ENCODE measurements at regions of chr13 and their contacts with region 1.

Region 1: DNA sequence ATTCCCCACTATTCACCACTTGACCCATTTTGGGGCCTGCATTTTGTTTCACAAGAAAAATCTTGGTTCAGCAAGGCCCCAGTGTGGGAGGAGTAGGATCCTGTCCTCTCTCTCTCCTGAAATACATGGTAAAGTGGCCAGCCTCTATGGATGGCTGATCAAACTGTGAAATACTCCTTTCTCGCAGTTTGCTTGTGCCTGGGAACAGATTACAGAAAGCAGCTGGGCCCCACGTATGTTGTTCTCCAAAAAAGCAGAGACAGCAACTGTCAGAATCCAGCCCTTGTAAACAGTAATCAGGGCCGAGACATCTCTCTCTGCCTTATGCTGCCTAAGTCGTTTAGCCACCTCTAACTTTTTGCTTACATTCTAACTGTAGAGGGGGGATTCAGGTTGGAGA is 61.0 kb upstream of the RAP2A start:
- DNase-seq: no peak
- ATAC-seq: no peak
- H3K4me3 ChIP-seq: no peak overlapping the region
- H3K27ac ChIP-seq: no peak overlapping the region
- H3K4me1 ChIP-seq: peaks cover 0 to 17% (median 4%) of the 10 kb centered on the region in 12 donors
- H3K27me3 ChIP-seq: no peaks in the 10 kb centered on the region
- CTCF ChIP-seq: no peak
- POLR2A ChIP-seq: no peak

Region 2: DNA sequence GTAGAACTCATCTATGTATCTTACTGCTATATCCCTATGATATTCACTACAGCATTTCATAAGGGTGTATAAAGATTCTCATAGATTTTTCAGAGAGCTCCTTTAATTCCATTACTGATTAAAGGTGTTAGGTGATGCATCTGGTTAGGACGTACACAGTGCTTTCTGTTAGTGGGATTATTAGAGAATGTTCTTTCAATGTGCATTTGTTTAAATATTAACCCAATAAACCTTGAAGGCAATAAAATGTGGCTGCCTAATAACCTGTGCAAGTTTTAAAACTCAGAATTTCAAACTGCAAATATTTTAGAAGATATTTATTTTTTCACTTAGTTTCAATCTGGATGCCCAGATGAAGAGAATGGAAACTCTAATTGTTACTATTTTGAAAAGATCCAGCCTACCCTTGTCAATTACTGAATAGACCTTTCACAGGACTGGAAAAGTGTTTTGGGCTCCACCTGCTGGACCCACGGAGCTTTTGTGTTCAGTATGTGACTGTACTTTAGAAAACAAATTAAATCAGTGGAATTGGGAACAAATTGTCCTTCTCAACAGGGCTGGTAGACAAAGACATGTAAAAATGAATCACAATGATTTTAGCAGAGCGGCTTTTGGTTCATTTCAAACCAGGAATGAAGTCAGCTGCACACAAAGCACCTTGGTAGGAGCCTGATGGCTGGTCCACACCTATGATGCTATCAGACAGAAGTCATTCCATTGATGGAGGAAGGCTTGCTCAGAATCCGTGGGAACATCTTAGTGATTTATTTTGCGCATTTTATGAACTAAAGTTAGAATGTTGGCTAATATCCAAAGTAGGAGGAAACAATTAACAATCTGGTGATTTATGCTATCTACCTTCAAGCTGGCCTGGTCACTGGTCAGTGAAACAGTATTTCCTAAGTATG is 28.4 kb before region 1 on chr13:
- intact Hi-C with region 1: no loop called
- DNase-seq: peak in 4 of 5 donors; percentile 51 to 71 (median 58)
- ATAC-seq: peak; percentile 63 to 83 (median 81)
- H3K4me3 ChIP-seq: no peak overlapping the region
- H3K27ac ChIP-seq: peak overlapping the region in 6 of 12 donors; percentile 2 to 50 (median 17)
- H3K4me1 ChIP-seq: peaks cover 6 to 52% (median 21%) of the 10 kb centered on the region in 12 donors
- H3K27me3 ChIP-seq: no peaks in the 10 kb centered on the region
- CTCF ChIP-seq: peak; percentile 58 to 82 (median 74)
- POLR2A ChIP-seq: no peak

Region 3: GRCh38 chr13:97659602-97660001 is 286.7 kb after region 1 on chr13:
- intact Hi-C with region 1: loop called in 4 of 10 experiments (anchors 10 kb)
- DNase-seq: peak in 1 of 5 donors; percentile 11
- ATAC-seq: peak in 3 of 4 donors; percentile 50 to 62 (median 52)
- H3K4me3 ChIP-seq: no peak overlapping the region
- H3K27ac ChIP-seq: no peak overlapping the region
- H3K4me1 ChIP-seq: peaks cover 0 to 13% (median 0%) of the 10 kb centered on the region in 12 donors
- H3K27me3 ChIP-seq: no peaks in the 10 kb centered on the region
- CTCF ChIP-seq: peak; percentile 20 to 60 (median 44)
- POLR2A ChIP-seq: no peak